CD14-positive monocyte (primary cell): ENCODE measurements at regions of chr6 and their contacts with region 1.

Region 1: GRCh38 chr6:43769526-43770416 is at the start of gene VEGFA:
- DNase-seq: peak; percentile 82 to 90 (median 85)
- H3K4me3 ChIP-seq: peak within 1 kb of the TSS; percentile 90 to 97 (median 96)
- H3K4me3 Mint-ChIP-seq: peak within 1 kb of the TSS; percentile 97 to 100
- H3K27ac ChIP-seq: peak within 1 kb of the TSS; percentile 90 to 92
- H3K27ac Mint-ChIP-seq: peak within 1 kb of the TSS; percentile 93 to 98 (median 96)
- H3K4me1 ChIP-seq: peaks cover 33 to 40% of the 10 kb centered on the region in 2 donors
- H3K4me1 Mint-ChIP-seq: peaks cover 37% of the 10 kb centered on the region
- H3K27me3 ChIP-seq: no peaks in the 10 kb centered on the region
- H3K27me3 Mint-ChIP-seq: peaks cover 5 to 19% (median 13%) of the 10 kb centered on the region in 3 donors
- CTCF ChIP-seq: peak; percentile 98
- polyA plus RNA-seq, gene VEGFA: 19.0 to 454 (median 32.0) TPM

Region 2: GRCh38 chr6:43667245-43668150 is 102.3 kb before region 1 on chr6:
- intact Hi-C with region 1: loop called (anchors 5 kb)
- DNase-seq: peak; percentile 57 to 70 (median 69)
- H3K4me3 ChIP-seq: no peak overlapping the region
- H3K4me3 Mint-ChIP-seq: peak overlapping the region in 1 of 2 donors; percentile 46
- H3K27ac ChIP-seq: no peak overlapping the region
- H3K27ac Mint-ChIP-seq: peak overlapping the region in 2 of 7 donors; percentile 30 to 85
- H3K4me1 ChIP-seq: peaks cover 8 to 14% of the 10 kb centered on the region in 2 donors
- H3K4me1 Mint-ChIP-seq: peaks cover 16% of the 10 kb centered on the region
- H3K27me3 ChIP-seq: peaks cover 0 to 3% of the 10 kb centered on the region in 2 donors
- H3K27me3 Mint-ChIP-seq: peaks cover 11 to 17% (median 16%) of the 10 kb centered on the region in 3 donors
- CTCF ChIP-seq: peak; percentile 95

Region 3: GRCh38 chr6:43790025-43790523 is 20.3 kb after region 1 on chr6:
- intact Hi-C with region 1: loop called in 1 of 2 experiments (anchors 2 kb)
- DNase-seq: peak; percentile 76 to 85 (median 83)
- H3K4me3 ChIP-seq: peak overlapping the region in 1 of 3 experiments; percentile 7
- H3K4me3 Mint-ChIP-seq: peak overlapping the region in 1 of 2 donors; percentile 70
- H3K27ac ChIP-seq: peak overlapping the region; percentile 26 to 44
- H3K27ac Mint-ChIP-seq: peak overlapping the region; percentile 42 to 85 (median 75)
- H3K4me1 ChIP-seq: peaks cover 30 to 39% of the 10 kb centered on the region in 2 donors
- H3K4me1 Mint-ChIP-seq: peaks cover 57% of the 10 kb centered on the region
- H3K27me3 ChIP-seq: no peaks in the 10 kb centered on the region
- H3K27me3 Mint-ChIP-seq: peaks cover 0 to 2% (median 2%) of the 10 kb centered on the region in 3 donors
- CTCF ChIP-seq: no peak

Region 4: DNA sequence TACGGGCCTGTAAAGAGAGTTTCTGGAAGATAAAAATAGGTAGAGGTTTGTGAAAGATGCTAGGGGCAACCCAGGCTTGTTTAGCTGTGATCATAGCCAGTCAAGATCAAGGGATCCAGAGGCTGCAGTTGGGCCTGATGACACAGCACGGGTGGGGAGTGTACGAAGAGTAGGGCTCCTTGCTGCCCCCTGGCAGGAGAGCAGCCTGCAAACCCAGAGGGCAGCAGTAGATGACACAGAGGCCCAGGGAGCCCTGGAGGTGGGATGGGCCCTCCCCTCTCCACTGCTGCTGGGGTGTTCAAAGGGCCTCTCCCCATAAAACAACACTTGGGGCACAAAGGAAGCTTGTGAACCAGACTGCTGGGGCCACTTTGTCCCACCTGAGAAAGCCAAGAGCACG is 47.4 kb after region 1 on chr6:
- intact Hi-C with region 1: loop called (anchors 5 kb)
- DNase-seq: peak; percentile 59 to 79 (median 73)
- H3K4me3 ChIP-seq: no peak overlapping the region
- H3K4me3 Mint-ChIP-seq: peak overlapping the region in 1 of 2 donors; percentile 32
- H3K27ac ChIP-seq: no peak overlapping the region
- H3K27ac Mint-ChIP-seq: peak overlapping the region in 4 of 7 donors; percentile 59 to 86 (median 69)
- H3K4me1 ChIP-seq: peaks cover 23 to 28% of the 10 kb centered on the region in 2 donors
- H3K4me1 Mint-ChIP-seq: peaks cover 40% of the 10 kb centered on the region
- H3K27me3 ChIP-seq: no peaks in the 10 kb centered on the region
- H3K27me3 Mint-ChIP-seq: peaks cover 0 to 3% (median 1%) of the 10 kb centered on the region in 3 donors
- CTCF ChIP-seq: peak; percentile 72

Region 5: DNA sequence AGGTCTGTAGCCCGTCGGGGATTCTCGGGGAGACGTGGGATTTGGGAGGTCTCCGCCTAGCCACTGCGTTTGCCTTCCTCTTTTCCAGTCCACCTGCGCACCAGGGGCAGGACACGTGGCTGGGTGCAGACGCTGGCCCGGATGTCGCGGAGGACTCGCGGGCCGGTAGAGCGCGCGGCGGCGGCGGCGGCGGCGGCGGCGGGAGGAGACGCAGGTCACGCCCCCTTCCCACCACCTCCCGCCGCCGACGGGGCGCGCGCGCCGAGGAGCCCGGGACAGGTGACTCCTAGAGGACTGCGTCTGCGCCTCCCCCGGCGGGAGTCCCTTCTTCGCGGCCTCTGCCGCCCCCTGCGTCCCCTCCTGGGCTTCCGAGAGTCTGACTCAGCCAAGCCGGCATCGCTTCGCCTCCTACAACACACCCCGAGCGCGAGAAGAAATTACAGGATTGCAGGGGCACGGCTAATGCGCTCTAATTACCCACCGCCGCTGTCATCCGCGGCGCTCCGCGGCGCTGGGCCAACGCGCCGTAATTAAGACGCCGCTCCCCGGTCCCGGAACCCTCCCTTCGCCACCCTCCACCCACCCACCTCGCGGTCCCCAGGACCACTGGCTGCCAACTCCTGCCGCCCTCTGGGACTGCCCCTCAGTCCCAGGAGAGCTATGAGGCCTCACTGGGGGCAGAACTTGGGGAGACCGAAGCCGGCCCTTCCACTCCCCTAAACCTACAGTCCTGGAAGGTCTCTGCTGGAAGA is 233.0 kb after region 1 on chr6:
- intact Hi-C with region 1: loop called in 1 of 2 experiments (anchors 5 kb)
- DNase-seq: peak; percentile 54 to 83 (median 58)
- H3K4me3 ChIP-seq: peak overlapping the region in 2 of 3 experiments; percentile 24 to 55
- H3K4me3 Mint-ChIP-seq: peak overlapping the region; percentile 65 to 84
- H3K27ac ChIP-seq: no peak overlapping the region
- H3K27ac Mint-ChIP-seq: peak overlapping the region in 5 of 7 donors; percentile 6 to 78 (median 50)
- H3K4me1 ChIP-seq: peaks cover 20 to 35% of the 10 kb centered on the region in 2 donors
- H3K4me1 Mint-ChIP-seq: peaks cover 33% of the 10 kb centered on the region
- H3K27me3 ChIP-seq: peaks cover 34 to 68% of the 10 kb centered on the region in 2 donors
- H3K27me3 Mint-ChIP-seq: peaks cover 67 to 82% (median 80%) of the 10 kb centered on the region in 3 donors
- CTCF ChIP-seq: no peak